ENCODE measurements at regions of chr20 and their contacts with region 1.

Region 1: DNA sequence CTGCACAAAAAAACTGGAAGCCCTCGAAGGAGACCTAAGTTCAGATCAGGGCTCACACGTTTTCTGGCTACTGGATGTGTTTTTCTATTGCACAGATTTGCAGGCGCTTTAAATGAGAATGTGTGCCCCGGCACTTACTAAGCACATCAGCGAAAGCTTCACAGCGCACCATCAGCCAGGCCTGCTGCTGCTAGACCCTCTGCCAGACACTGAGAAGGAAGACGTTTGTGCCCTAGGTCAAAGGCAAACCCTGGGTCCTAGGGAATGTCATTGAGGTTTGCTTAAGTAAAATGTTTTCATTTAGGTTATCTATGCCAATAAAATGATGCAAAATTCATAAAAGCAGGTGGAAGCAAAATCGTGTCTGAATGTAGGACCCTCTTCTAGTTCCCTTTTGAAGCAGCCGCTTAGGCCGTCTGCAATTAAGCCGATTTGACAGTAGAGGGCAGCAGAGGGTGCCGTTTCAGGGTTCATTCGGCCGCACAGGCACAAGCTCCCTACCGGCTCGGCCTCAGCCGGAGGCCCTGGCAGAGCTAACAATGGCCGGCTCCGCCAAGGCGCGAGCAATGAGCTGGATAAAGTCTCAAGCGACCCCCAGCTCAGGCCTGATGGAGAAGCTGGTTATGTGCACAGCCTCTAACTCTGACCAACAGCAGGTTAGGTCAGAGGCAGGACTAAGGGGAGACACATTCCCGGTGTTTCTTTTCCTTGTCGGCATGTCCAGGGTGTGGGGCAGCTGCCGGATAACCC is 107.2 kb upstream of the FOXA2 start:
- DNase-seq: no peak
- ATAC-seq: peak; percentile 97
- H3K4me3 ChIP-seq: no peak overlapping the region
- H3K27ac ChIP-seq: no peak overlapping the region
- H3K4me1 ChIP-seq: no peaks in the 10 kb centered on the region
- H3K27me3 ChIP-seq: no peaks in the 10 kb centered on the region
- CTCF ChIP-seq: peak; percentile 81 to 89 (median 84)
- EP300 ChIP-seq: no peak
- POLR2A ChIP-seq: no peak
- RAD21 ChIP-seq: peak; percentile 89

Region 2: DNA sequence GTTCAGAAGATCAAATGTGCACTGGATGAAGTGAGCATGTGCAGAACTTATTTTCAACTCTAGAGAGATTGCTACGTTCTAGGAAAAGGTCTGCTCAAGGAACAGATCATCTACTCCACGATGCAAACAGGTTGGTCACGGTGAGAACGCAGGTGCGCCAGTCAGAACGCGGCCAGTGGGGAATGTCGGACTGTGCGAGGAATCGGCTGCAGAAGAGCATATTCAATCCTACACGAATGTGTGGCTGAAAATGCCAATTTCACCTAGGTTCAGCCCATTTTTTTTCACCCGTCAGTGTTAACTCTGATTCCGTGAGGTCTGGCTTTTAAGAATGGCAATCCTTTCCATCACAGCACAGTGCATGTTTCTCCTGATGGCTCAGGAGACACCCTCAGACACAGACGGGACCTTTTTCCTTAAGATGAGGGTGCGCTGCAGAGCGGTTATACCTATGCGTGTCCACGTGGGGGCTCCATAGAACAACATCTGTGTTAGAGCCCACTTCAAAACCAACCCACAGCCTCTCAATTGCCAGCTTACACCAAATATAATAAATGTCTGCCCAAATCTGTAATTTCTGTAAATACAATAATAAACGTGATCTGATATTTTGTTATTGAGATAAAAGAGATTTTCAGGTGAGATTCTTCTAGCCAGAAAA is 357.5 kb before region 1 on chr20:
- CTCF ChIA-PET with region 1: interaction called, 80 read pairs
- POLR2A ChIA-PET with region 1: no interaction called
- RAD21 ChIA-PET with region 1: interaction called, 8 read pairs
- SMC1A ChIA-PET with region 1: interaction called, 37 read pairs
- in situ Hi-C with region 1: loop called (anchors 5 kb)
- intact Hi-C with region 1: no loop called
- DNase-seq: no peak
- ATAC-seq: peak; percentile 92
- H3K4me3 ChIP-seq: no peak overlapping the region
- H3K27ac ChIP-seq: no peak overlapping the region
- H3K4me1 ChIP-seq: no peaks in the 10 kb centered on the region
- H3K27me3 ChIP-seq: no peaks in the 10 kb centered on the region
- CTCF ChIP-seq: peak; percentile 73 to 80 (median 73)
- EP300 ChIP-seq: no peak
- POLR2A ChIP-seq: no peak
- RAD21 ChIP-seq: peak; percentile 49

Region 3: GRCh38 chr20:22716821-22717351 is 25.3 kb after region 1 on chr20:
- CTCF ChIA-PET with region 1: interaction called, 11 read pairs
- POLR2A ChIA-PET with region 1: no interaction called
- RAD21 ChIA-PET with region 1: interaction called, 4 read pairs
- SMC1A ChIA-PET with region 1: interaction called, 8 read pairs
- in situ Hi-C with region 1: no loop called
- intact Hi-C with region 1: no loop called
- DNase-seq: no peak
- ATAC-seq: no peak
- H3K4me3 ChIP-seq: no peak overlapping the region
- H3K27ac ChIP-seq: no peak overlapping the region
- H3K4me1 ChIP-seq: no peaks in the 10 kb centered on the region
- H3K27me3 ChIP-seq: no peaks in the 10 kb centered on the region; a peak in 2 of 4 replicates
- CTCF ChIP-seq: no peak
- EP300 ChIP-seq: no peak
- POLR2A ChIP-seq: no peak
- RAD21 ChIP-seq: no peak

Region 4: DNA sequence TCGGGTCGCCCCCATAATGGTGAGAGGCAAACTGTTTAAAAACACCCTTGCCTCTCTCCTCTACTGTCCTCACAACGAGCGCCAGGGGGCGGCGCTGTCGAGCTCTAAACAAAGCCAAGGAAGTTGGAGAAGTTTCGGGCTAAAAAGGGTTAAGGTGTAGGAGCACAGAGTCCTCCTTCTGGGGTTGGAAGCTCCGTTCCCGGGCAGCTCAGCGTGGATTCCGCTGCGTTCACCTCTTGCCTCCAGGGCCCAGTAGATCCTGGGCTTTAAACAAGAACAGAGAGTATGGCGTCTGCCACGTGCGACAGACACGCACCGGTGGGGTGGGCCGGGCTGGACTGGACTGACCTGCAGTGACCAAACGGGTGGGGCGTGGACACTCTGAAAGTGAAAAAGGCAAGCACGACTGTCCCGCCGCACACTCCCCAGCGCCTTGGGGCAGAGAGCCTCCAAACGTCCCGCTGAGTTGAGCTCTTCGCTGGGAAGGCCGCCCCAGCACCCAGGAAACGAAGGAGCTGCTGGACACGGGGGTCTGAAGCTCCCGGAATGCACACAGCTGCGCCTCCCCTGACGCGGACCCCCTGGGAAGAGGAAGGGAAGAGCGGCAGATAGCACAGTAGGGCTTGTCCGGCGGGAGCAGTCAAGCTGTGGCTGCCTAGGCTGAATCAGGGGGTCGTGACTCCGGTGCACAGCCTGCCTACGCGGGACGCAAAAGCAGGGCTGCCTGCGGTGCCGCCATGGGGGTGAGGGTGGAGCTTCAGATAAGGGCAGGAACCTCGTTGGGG is 359.5 kb after region 1 on chr20:
- CTCF ChIA-PET with region 1: interaction called, 12 read pairs
- POLR2A ChIA-PET with region 1: no interaction called
- RAD21 ChIA-PET with region 1: interaction called, 3 read pairs
- SMC1A ChIA-PET with region 1: interaction called, 3 read pairs
- in situ Hi-C with region 1: no loop called
- intact Hi-C with region 1: no loop called
- DNase-seq: no peak
- ATAC-seq: peak; percentile 64
- H3K4me3 ChIP-seq: no peak overlapping the region
- H3K27ac ChIP-seq: no peak overlapping the region
- H3K4me1 ChIP-seq: no peaks in the 10 kb centered on the region
- H3K27me3 ChIP-seq: peaks cover 8% of the 10 kb centered on the region in 2 experiments; a peak in 3 of 4 replicates
- CTCF ChIP-seq: peak; percentile 42 to 54 (median 49); a peak in 4 of 6 replicates
- EP300 ChIP-seq: no peak
- POLR2A ChIP-seq: no peak
- RAD21 ChIP-seq: peak; percentile 84

Region 5: GRCh38 chr20:23235173-23236027 is 543.9 kb after region 1 on chr20:
- CTCF ChIA-PET with region 1: interaction called, 54 read pairs
- POLR2A ChIA-PET with region 1: no interaction called
- RAD21 ChIA-PET with region 1: interaction called, 17 read pairs
- SMC1A ChIA-PET with region 1: interaction called, 31 read pairs
- in situ Hi-C with region 1: loop called (anchors 10 kb)
- intact Hi-C with region 1: loop called (anchors 1 kb)
- DNase-seq: no peak
- ATAC-seq: peak; percentile 94
- H3K4me3 ChIP-seq: no peak overlapping the region
- H3K27ac ChIP-seq: no peak overlapping the region
- H3K4me1 ChIP-seq: no peaks in the 10 kb centered on the region
- H3K27me3 ChIP-seq: no peaks in the 10 kb centered on the region
- CTCF ChIP-seq: peak; percentile 74 to 77 (median 74)
- EP300 ChIP-seq: no peak
- POLR2A ChIP-seq: no peak
- RAD21 ChIP-seq: peak; percentile 91

Region 6: GRCh38 chr20:23340524-23340923 is 649.0 kb after region 1 on chr20:
- CTCF ChIA-PET with region 1: interaction called, 35 read pairs
- POLR2A ChIA-PET with region 1: no interaction called
- RAD21 ChIA-PET with region 1: interaction called, 21 read pairs
- SMC1A ChIA-PET with region 1: interaction called, 9 read pairs
- in situ Hi-C with region 1: loop called (anchors 5 kb)
- intact Hi-C with region 1: loop called (anchors 1 kb)
- DNase-seq: no peak
- ATAC-seq: peak; percentile 79
- H3K4me3 ChIP-seq: no peak overlapping the region
- H3K27ac ChIP-seq: no peak overlapping the region
- H3K4me1 ChIP-seq: no peaks in the 10 kb centered on the region; the same call in none of the 2 replicates
- H3K27me3 ChIP-seq: no peaks in the 10 kb centered on the region
- CTCF ChIP-seq: peak; percentile 45 to 56 (median 54); a peak in 5 of 6 replicates
- EP300 ChIP-seq: no peak
- POLR2A ChIP-seq: no peak
- RAD21 ChIP-seq: peak; percentile 81

Measured in GM12878 (cell line).